PC-9 (cell line): ENCODE measurements at regions of chr18 and their contacts with region 1.

Region 1: GRCh38 chr18:3245853-3246634 is 1.6 kb upstream of the MYL12A start:
- DNase-seq: peak; percentile 79 to 88
- H3K4me3 ChIP-seq: peak overlapping the region; percentile 86
- H3K27ac ChIP-seq: peak overlapping the region; percentile 87
- H3K4me1 ChIP-seq: peaks cover 32% of the 10 kb centered on the region
- H3K27me3 ChIP-seq: no peaks in the 10 kb centered on the region
- CTCF ChIP-seq: peak; percentile 96

Region 2: GRCh38 chr18:1865869-1866268 is 1380.2 kb before region 1 on chr18:
- CTCF ChIA-PET with region 1: no interaction called
- POLR2A ChIA-PET with region 1: no interaction called
- intact Hi-C with region 1: no loop called
- DNase-seq: no peak
- H3K4me3 ChIP-seq: no peak overlapping the region
- H3K27ac ChIP-seq: no peak overlapping the region
- H3K4me1 ChIP-seq: no peaks in the 10 kb centered on the region
- H3K27me3 ChIP-seq: no peaks in the 10 kb centered on the region
- CTCF ChIP-seq: no peak

Region 3: DNA sequence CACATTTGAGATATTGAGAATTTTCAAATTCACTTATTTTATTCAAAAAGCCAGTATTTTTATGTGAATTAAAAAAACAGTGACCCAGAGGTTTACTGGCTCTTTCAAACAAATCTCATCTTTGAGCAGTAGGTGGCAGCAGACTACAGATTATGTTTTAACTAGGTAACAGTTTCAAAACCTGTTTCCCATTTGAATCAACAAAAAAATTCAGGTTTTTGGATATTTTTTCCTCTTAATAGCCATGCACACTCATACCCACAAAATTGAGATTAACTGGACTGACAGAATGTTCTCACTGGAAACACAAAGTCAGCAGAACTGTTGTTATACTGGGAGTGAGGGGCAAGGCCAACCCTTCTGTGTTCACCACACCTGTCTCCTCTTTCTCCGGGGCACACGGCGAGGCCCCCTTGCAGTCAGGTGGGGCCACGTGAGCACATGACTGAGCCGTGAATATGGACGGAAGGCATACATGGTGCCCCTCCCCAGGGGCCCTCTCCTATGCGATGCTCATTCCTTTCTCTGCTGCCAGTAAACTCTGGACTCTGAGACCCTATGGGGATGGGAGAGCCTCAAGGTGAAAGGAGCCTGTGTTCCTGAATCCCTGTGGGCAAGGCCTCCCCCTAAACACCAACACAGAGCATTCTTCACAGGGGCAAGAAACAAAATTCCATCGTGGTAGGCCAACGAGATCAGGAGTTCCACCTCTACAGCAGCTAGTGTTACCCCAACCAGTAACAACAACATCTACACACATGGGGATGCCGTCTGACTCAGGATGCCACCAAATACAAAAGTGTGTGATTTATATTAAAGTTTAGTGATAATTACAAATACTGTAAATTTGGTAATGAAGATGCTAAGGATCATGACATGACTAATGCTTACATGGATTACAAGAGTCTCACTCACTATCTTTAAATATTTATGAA is 313.5 kb before region 1 on chr18:
- CTCF ChIA-PET with region 1: interaction called, 4 read pairs
- POLR2A ChIA-PET with region 1: interaction called, 7 read pairs
- intact Hi-C with region 1: loop called (anchors 1 kb)
- DNase-seq: peak; percentile 32 to 52
- H3K4me3 ChIP-seq: no peak overlapping the region
- H3K27ac ChIP-seq: no peak overlapping the region
- H3K4me1 ChIP-seq: no peaks in the 10 kb centered on the region
- H3K27me3 ChIP-seq: no peaks in the 10 kb centered on the region
- CTCF ChIP-seq: peak; percentile 89

Region 4: GRCh38 chr18:3044894-3045698 is 200.9 kb before region 1 on chr18:
- CTCF ChIA-PET with region 1: no interaction called
- POLR2A ChIA-PET with region 1: no interaction called
- intact Hi-C with region 1: no loop called
- DNase-seq: peak; percentile 54 to 67
- H3K4me3 ChIP-seq: no peak overlapping the region
- H3K27ac ChIP-seq: peak overlapping the region; percentile 54
- H3K4me1 ChIP-seq: peaks cover 29% of the 10 kb centered on the region
- H3K27me3 ChIP-seq: no peaks in the 10 kb centered on the region
- CTCF ChIP-seq: no peak

Region 5: DNA sequence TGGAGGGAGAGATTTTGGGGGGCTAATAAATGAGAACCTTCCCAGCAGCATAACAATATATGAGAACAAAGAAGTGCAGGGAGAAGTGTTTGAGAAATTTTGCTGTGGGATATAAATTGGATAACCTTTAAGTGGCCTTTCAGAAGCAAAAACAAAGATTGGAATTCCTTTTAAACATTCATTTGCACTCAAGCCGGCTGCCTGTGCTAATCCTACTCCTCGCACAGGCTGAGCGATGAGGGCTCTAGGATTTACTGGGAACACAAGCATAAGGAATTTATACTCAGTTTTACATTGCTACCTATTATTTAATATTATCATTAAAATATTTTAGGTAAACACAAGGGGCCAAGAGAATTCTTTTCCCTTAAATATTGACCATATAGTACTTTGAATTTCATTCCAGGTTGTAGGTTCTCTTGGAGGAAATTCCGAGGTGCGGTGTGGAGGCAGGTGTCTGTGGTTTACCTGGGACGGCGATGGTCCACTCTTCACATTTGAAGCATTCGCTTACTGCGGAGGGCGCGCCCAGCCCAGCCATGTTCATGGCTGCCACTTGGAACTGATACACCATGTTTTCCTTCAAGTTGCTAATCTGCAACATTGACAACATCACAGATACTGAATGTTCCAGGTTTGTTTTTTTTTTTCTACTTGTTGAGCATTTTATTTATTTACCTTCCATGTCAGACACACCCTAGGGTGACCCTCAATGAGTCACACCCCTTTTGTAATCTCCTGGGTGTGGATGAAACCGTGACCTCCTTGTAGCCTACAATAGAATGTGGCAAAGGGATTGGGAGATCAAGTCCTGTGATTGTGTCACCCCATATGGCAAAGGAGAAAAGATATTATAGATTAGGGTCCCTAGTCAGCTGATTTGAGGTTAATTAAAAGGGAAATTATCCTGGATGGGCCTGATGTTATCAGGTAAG is 126.4 kb before region 1 on chr18:
- CTCF ChIA-PET with region 1: no interaction called
- POLR2A ChIA-PET with region 1: interaction called, 5 read pairs
- intact Hi-C with region 1: loop called (anchors 2 kb)
- DNase-seq: peak; percentile 52 to 98
- H3K4me3 ChIP-seq: no peak overlapping the region
- H3K27ac ChIP-seq: peak overlapping the region; percentile 82
- H3K4me1 ChIP-seq: peaks cover 68% of the 10 kb centered on the region
- H3K27me3 ChIP-seq: no peaks in the 10 kb centered on the region
- CTCF ChIP-seq: no peak

Region 6: GRCh38 chr18:3230401-3231334 is 15.4 kb before region 1 on chr18:
- CTCF ChIA-PET with region 1: no interaction called
- POLR2A ChIA-PET with region 1: interaction called, 10 read pairs
- intact Hi-C with region 1: no loop called
- DNase-seq: peak in 1 of 2 experiments; percentile 43
- H3K4me3 ChIP-seq: no peak overlapping the region
- H3K27ac ChIP-seq: no peak overlapping the region
- H3K4me1 ChIP-seq: peaks cover 9% of the 10 kb centered on the region
- H3K27me3 ChIP-seq: no peaks in the 10 kb centered on the region
- CTCF ChIP-seq: no peak

Region 7: DNA sequence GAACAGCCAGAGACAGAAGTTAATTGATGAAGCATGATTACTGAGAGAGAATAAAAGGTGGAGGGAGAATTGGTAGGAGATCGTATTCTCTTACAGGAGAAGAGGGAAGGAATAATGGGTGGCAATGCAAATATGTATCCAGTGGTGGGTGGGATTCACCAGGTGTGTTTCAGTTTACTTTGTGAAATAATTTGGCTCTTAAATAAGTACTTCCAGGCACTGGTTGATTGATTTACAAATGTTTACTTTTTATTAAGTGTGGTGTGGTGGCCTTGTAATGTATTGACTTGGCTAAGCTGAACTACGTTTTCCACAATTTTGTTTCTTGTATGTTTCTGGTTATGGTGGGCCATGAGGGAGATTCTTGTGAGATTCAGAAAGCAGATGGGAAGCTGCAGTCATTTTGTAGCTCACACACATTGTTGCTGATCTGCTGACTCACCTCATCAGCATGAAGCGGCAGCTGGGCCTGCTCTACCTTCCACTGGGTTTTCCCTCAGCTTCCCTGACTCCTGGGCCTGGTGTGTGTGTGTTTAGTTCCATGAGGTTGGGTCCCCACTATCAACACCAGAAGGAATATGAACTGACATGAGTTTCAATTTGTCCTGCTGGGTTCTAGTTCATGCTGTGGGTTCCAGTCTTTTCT is 48.5 kb after region 1 on chr18:
- CTCF ChIA-PET with region 1: no interaction called
- POLR2A ChIA-PET with region 1: no interaction called
- intact Hi-C with region 1: no loop called
- DNase-seq: no peak
- H3K4me3 ChIP-seq: no peak overlapping the region
- H3K27ac ChIP-seq: no peak overlapping the region
- H3K4me1 ChIP-seq: 0 out of 2 replicates have a peak, but pooled peaks cover 8% of the 10 kb centered on the region
- H3K27me3 ChIP-seq: no peaks in the 10 kb centered on the region
- CTCF ChIP-seq: no peak

Region 8: DNA sequence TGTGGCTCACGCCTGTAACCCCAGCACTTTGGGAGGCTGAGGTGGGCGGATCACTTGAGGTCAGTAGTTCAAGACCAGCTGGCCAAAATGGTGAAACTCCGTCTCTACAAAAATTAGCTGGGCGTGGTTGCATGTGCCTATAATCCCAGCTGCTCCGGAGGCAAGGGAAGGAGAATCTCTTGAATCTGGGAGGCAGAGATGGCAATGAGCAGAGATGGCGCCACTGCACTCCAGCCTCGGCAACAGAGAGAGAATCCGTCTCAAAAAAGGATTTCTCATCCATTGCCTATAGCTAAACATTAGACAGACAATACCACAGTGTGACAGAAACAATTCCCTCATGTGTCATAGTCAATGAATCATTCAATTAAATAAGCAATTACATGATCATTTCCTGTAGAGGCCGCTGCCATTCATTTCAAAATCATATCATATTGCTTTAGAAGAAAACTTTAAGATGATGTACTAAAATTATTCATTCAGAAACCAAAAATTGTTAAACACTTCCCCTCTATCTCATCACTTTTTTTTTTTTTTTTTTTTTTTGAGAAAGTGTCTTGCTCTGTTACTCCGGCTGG is 134.4 kb after region 1 on chr18:
- CTCF ChIA-PET with region 1: no interaction called
- POLR2A ChIA-PET with region 1: interaction called, 12 read pairs
- intact Hi-C with region 1: no loop called
- DNase-seq: peak in 1 of 2 experiments; percentile 81
- H3K4me3 ChIP-seq: peak overlapping the region; percentile 35; the same call in 1 of the 2 replicates
- H3K27ac ChIP-seq: peak overlapping the region; percentile 99
- H3K4me1 ChIP-seq: peaks cover 64% of the 10 kb centered on the region
- H3K27me3 ChIP-seq: no peaks in the 10 kb centered on the region
- CTCF ChIP-seq: peak; percentile 44; the same call in 1 of the 2 replicates